ENCODE measurements at regions of chr11 and their contacts with region 1.

Region 1: DNA sequence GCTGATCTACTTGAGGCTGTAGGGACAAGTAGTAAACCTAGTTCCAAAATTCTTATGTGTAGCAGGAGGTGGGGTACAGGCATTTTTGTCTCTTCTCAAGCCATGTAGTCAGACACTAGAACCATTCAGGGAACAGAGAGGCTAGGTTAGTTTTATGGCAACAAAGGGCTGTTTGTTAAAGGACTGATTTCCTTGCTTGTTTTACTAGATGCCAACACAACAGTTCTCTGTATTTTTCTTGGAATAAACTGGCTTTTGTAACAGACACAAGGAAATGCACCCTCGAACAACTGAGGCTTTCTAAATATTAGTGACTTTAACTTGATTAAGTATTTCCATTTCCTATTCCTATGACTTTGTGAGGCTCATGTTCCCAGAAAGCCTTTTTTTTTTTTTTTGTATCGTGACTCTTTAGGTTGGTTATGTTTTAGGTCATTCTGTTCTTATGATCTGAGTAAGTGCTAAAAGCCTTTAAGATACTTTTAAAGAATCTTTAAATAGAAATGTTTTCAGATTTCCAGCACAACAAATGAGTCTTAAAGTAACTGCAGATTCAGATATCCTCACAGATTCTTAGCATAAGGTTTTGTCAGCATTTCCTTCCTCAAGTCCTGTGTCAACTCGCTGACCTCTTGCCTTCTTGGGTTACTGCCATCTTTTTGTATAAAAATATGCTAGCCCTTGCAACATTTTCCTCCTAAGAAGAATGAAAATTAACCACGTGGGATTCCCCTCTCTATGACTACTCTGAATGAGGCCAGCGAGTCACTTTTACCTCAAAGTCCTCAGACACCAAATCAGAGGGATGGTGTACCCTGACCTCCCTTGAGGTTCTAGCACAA is 92.5 kb downstream of the CCDC83 start:
- DNase-seq: peak; percentile 97
- H3K4me3 ChIP-seq: no peak overlapping the region
- H3K27ac ChIP-seq: peak overlapping the region; percentile 60
- H3K4me1 ChIP-seq: peaks cover 38% of the 10 kb centered on the region
- H3K27me3 ChIP-seq: no peaks in the 10 kb centered on the region
- CTCF ChIP-seq: no peak
- POLR2A ChIP-seq: no peak

Region 2: DNA sequence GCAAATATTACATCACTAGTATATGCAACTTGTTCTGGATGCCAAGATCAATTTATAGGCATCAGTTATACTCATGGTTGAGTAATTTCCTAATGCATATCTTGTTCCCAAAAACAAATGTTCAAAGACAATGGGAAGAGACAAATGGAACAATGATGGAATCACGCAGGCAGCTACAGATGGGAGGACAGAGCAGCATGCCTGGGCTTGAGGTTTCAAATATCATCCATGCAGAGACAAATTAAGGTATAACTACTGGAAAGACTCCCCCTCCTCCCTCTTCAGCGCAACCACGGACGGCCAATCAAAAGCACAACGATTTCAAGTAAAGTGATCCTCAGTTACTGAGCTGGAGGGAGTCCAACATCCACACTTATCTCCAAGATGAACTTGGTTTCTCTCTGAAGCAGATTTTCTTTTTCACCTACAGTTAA is 14.3 kb after region 1 on chr11:
- CTCF ChIA-PET with region 1: interaction called, 7 read pairs
- POLR2A ChIA-PET with region 1: no interaction called
- dilution Hi-C with region 1: no loop called
- intact Hi-C with region 1: loop called (anchors 2 kb)
- DNase-seq: peak; percentile 75
- H3K4me3 ChIP-seq: no peak overlapping the region
- H3K27ac ChIP-seq: peak overlapping the region; percentile 51
- H3K4me1 ChIP-seq: peaks cover 23% of the 10 kb centered on the region
- H3K27me3 ChIP-seq: no peaks in the 10 kb centered on the region
- CTCF ChIP-seq: no peak
- POLR2A ChIP-seq: no peak

Region 3: DNA sequence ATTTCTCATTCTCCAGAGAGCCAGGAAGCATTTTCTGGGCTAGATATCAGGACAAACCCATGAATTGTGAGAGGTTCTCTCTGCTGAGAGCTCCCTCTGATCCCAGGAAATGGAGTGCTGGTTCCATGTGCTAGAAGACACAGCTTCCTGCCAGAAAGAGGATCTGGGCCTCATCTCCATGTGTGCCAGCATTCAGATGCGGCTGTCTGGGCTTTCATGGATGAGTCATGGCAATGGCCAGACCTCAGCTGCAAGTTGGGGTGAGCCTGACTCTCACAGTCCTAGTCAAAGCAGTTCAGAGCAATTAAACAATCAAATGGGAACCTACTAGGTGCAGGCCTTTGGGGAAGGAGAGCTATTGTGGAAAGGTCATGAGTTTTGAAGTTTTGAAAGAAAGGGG is 214.6 kb after region 1 on chr11:
- CTCF ChIA-PET with region 1: no interaction called
- POLR2A ChIA-PET with region 1: no interaction called
- dilution Hi-C with region 1: no loop called
- intact Hi-C with region 1: no loop called
- DNase-seq: peak; percentile 32
- H3K4me3 ChIP-seq: no peak overlapping the region
- H3K27ac ChIP-seq: no peak overlapping the region
- H3K4me1 ChIP-seq: peaks cover 8% of the 10 kb centered on the region
- H3K27me3 ChIP-seq: no peaks in the 10 kb centered on the region
- CTCF ChIP-seq: no peak
- POLR2A ChIP-seq: no peak

Region 4: DNA sequence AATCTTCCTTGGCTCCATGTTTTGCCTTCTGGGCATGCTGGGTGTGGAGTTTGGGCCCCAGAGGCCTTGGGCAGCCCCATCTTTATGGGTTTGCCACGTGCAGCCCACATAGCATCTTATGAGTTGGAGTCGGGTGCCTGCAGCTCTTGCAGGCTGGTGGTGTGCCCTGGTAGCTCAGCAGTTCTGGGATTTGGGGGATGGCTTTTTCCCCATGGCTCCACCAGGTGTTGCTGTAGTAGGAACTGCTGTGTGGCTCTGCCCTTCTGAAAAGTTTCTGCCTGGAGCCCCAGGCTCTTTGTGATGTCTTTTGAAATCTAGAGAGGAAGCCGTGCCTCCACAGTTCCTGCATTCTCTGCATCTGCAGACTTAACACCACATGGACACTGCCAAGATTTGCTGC is 313.7 kb after region 1 on chr11:
- CTCF ChIA-PET with region 1: no interaction called
- POLR2A ChIA-PET with region 1: no interaction called
- dilution Hi-C with region 1: no loop called
- intact Hi-C with region 1: no loop called
- DNase-seq: no peak
- H3K4me3 ChIP-seq: no peak overlapping the region
- H3K27ac ChIP-seq: no peak overlapping the region
- H3K4me1 ChIP-seq: no peaks in the 10 kb centered on the region
- H3K27me3 ChIP-seq: no peaks in the 10 kb centered on the region
- CTCF ChIP-seq: no peak
- POLR2A ChIP-seq: no peak